ENCODE measurements at regions of chr4 and their contacts with region 1.

Region 1: DNA sequence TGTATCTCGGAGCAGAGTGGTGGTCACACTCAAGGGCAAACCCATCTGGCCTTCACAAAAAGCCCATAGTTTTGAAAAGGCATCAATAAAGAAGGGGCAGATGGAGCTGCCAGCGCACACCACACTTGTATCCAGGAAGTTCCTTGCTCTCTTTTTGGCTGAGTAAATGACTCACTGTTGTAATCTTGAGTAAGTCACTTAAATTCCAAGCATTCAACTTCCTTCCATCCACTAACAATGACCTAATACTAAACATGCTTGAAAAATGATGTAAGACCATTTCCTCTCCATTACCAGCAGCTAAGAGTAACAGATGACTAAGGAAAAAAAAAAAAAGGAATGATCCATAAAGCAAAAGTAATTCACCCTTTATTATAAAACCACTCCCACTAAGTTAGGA is 32.4 kb upstream of the MYOZ2 start:
- DNase-seq: peak; percentile 93
- H3K4me3 ChIP-seq: no peak overlapping the region
- H3K27ac ChIP-seq: peak overlapping the region; percentile 95
- H3K4me1 ChIP-seq: peaks cover 43% of the 10 kb centered on the region
- H3K27me3 ChIP-seq: no peaks in the 10 kb centered on the region
- CTCF ChIP-seq: no peak
- POLR2A ChIP-seq: peak; percentile 54

Region 2: DNA sequence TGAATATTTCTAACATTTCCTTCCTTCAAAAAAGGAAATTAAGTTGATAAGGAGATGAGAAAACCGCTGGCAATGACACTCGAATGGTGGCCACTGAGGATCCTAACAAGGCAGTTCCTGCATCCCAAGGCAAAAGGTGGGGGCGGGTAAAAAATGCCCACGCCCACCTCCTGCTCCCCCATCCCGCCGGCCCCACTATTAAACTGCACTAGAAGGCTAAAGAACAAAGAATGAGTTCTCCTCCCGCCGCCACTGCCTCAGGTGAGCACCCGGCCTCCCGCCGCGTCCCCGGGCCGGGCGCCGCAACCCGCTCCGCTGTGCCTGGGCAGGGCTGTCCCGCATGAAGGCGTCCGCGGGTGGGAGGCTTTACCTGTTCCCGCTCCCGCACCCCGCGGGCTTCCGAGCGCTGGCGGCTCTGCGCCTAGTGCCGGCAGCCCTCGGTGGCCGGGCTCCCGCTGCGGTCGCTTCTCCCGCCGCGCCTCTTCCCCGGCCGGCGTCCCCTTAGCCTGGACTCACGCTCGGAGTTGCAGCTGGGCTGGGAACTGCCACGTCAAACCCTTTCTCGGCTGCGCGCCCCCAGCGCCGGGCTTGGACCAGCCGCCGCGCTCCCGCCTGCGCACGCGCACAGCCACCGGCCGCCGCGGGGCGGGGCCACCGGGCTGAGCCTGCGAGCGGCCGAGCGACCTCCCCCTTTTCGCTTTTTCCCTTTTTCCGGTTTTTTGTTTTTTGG is 267.5 kb before region 1 on chr4 and contains the start of gene SEC24D:
- CTCF ChIA-PET with region 1: no interaction called
- POLR2A ChIA-PET with region 1: no interaction called
- dilution Hi-C with region 1: no loop called
- intact Hi-C with region 1: loop called (anchors 10 kb)
- DNase-seq: peak; percentile 89
- H3K4me3 ChIP-seq: peak within 1 kb of the TSS; percentile 87 to 95 (median 95)
- H3K27ac ChIP-seq: peak within 1 kb of the TSS; percentile 91
- H3K4me1 ChIP-seq: peaks cover 20% of the 10 kb centered on the region
- H3K27me3 ChIP-seq: no peaks in the 10 kb centered on the region
- CTCF ChIP-seq: no peak
- POLR2A ChIP-seq: peak; percentile 73
- total RNA-seq, gene SEC24D: 127 and 133 TPM in 2 replicates

Region 3: DNA sequence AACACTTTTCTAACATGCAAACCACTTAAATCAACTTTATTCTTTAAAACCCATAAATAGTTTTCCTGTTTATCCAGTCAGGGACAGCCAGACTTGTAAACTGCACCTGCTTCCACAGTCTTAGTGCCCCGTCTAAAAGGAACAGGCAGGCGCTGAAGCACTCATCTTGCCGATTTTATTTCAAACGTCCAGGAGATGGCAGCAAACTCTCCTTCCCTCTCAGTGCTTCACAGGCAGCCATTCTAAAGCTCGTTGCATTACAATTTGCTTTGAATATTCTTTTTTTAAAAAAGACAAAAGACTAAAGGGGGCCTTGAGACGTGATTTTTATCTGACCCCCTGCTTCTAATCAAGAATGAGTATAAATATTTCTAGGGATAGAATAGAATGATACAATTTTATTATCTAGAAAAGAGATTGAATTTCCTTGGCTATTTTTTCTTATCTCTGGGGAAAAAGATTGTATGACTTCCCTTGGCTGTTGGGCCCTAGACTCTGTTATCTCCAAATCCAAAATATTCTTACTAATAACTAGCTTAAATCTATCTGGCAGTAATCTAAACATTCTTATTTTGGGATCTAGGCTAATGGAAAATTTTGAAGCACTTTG is 61.2 kb before region 1 on chr4:
- CTCF ChIA-PET with region 1: interaction called, 5 read pairs
- POLR2A ChIA-PET with region 1: interaction called, 4 read pairs
- dilution Hi-C with region 1: no loop called
- intact Hi-C with region 1: loop called (anchors 2 kb)
- DNase-seq: peak; percentile 86
- H3K4me3 ChIP-seq: no peak overlapping the region
- H3K27ac ChIP-seq: no peak overlapping the region
- H3K4me1 ChIP-seq: peaks cover 15% of the 10 kb centered on the region
- H3K27me3 ChIP-seq: no peaks in the 10 kb centered on the region
- CTCF ChIP-seq: peak; percentile 50
- POLR2A ChIP-seq: no peak

Region 4: DNA sequence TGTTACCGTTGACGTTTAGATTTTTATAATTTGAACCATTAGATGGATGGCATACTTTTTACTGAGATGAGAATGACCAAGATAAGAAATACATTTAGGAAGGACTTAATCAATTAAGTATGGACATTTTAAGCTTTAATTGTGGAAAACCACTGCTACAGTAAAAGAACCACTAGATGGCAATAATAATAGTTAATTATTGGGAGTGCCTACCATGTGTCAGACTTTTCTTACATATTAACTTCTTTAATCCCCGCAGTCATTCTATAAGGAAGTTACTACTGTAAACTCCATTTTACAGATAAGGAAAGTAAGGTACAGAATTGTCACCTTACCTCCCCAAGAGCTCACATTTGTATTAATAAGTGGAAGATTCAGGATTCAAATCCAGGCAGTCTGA is 16.1 kb before region 1 on chr4:
- CTCF ChIA-PET with region 1: interaction called, 23 read pairs
- POLR2A ChIA-PET with region 1: no interaction called
- dilution Hi-C with region 1: no loop called
- intact Hi-C with region 1: no loop called
- DNase-seq: peak; percentile 53
- H3K4me3 ChIP-seq: no peak overlapping the region
- H3K27ac ChIP-seq: no peak overlapping the region
- H3K4me1 ChIP-seq: no peaks in the 10 kb centered on the region
- H3K27me3 ChIP-seq: no peaks in the 10 kb centered on the region
- CTCF ChIP-seq: peak; percentile 14 to 22
- POLR2A ChIP-seq: no peak

Region 5: DNA sequence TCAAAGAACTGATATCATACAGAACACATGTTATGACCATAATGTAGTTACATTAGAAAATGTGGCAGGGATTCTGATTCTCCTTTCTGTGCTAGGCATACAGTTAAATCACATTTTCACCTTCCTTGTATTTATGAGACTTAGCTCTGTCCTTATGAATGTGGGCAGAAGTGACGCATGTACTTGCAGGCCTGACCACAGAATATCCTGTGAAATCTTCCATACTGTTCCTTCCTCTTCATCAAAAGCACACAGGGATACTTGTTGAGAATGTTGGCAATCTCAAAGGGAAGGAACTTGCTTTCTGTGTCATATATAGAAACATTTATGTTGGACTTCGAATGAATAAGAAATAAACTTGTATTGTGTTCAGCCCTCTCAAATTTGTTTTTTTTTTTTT is 15.1 kb after region 1 on chr4:
- CTCF ChIA-PET with region 1: interaction called, 9 read pairs
- POLR2A ChIA-PET with region 1: interaction called, 3 read pairs
- dilution Hi-C with region 1: no loop called
- intact Hi-C with region 1: loop called (anchors 1 kb)
- DNase-seq: peak; percentile 89
- H3K4me3 ChIP-seq: no peak overlapping the region
- H3K27ac ChIP-seq: peak overlapping the region; percentile 80
- H3K4me1 ChIP-seq: peaks cover 40% of the 10 kb centered on the region
- H3K27me3 ChIP-seq: no peaks in the 10 kb centered on the region
- CTCF ChIP-seq: no peak
- POLR2A ChIP-seq: no peak

Region 6: DNA sequence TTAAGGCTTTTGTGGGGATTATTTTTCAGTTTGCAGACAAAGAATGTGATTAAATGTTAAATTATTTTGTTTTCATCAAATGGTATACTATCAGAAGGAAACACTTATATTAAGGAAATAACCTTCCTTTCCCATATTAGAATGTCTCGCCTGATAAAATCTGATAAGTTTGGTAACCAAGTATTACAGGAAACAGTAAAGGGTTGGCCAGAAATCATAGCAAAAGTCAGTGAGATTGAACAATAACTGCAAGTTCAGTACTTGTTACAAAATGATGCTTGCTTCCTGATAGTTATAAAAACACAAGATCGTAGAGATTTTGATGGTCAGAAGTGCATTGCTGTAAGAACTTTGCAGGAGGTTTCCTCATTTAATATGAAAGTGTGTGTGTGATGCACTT is 178.1 kb after region 1 on chr4:
- CTCF ChIA-PET with region 1: no interaction called
- POLR2A ChIA-PET with region 1: no interaction called
- dilution Hi-C with region 1: no loop called
- intact Hi-C with region 1: loop called (anchors 2 kb)
- DNase-seq: peak; percentile 97
- H3K4me3 ChIP-seq: peak overlapping the region in 1 of 3 experiments; percentile 26
- H3K27ac ChIP-seq: peak overlapping the region; percentile 72
- H3K4me1 ChIP-seq: peaks cover 57% of the 10 kb centered on the region
- H3K27me3 ChIP-seq: no peaks in the 10 kb centered on the region
- CTCF ChIP-seq: no peak
- POLR2A ChIP-seq: peak; percentile 63